Naive thymus-derived CD4-positive, alpha-beta T cell (primary cell): ENCODE measurements at regions of chr9 and their contacts with region 1.

Region 1: DNA sequence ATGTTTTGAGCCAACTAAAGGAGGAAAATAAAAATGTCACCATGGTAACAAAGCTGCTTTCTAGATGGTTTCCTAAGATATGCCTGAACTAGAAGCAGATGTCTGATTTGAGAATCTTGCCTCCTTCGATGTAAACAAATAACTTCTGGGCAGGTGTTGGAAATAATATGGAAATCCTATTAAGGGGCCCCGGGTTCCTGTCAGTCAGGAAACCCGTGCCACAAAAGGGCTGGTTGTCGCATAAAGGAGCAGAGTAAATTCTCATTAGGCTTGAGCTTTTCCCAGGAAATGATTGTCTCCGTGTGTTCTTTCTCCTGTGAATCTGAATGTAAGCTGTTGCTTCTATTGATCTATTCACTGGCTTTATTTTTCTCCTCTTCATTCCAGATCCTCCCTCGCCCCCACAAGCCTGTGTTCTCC is 90.8 kb downstream of the TLE4 start:
- DNase-seq: peak in 4 of 9 donors; percentile 3 to 36 (median 18)
- ATAC-seq: no peak
- H3K4me3 ChIP-seq: no peak overlapping the region
- H3K4me3 Mint-ChIP-seq: peak overlapping the region in 3 of 10 donors; percentile 12 to 34 (median 27)
- H3K27ac ChIP-seq: no peak overlapping the region
- H3K27ac Mint-ChIP-seq: peak overlapping the region in 8 of 9 donors; percentile 19 to 79 (median 52)
- H3K4me1 ChIP-seq: peaks cover 5 to 9% of the 10 kb centered on the region in 2 donors
- H3K4me1 Mint-ChIP-seq: peaks cover 15 to 77% (median 39%) of the 10 kb centered on the region in 7 donors
- H3K27me3 ChIP-seq: no peaks in the 10 kb centered on the region
- H3K27me3 Mint-ChIP-seq: no peaks in the 10 kb centered on the region

Region 2: DNA sequence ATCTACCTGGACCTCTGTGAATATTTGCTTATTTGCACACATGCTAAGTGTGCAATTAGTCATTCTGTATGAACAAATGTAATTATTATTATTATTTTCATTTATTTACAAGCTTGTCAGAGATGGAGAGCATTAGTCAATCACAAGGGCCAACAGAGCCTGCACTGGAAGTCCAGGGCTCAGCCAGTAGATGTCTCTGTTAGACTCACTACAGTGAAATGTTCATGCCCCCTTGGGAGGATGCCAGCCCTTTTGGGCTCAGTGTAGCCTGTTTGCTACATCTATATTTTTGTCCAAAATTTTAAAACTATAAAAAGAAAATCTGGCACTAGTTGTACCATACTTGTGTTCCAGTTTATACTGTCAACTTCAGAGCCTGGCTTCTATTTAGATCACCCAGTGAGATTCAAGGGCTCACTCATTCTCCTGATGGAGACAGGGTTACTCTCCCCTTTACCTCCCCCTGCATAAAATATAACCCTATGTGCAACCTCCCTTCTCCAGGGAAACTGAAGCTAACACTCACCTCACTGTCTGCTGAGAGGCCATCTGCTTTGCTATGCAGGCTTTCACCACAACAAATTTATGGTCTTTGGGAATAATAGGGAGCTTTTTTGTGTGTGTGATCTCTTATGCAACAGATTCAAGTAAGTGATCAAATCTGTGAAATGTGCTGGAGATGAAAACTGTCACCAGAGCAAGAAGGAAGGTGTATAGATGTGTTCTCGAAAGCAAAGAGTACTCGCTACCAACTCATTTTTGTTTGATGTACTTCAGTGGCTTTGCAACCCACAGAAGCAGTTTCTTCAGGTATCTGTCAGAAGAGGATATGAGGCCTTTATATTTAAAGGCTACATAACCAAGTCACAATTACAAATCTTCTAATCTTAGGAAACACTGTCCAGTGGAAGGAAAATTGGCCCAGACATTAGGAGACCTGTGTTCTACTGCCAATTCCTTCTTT is 190.7 kb before region 1 on chr9:
- CTCF ChIA-PET with region 1: no interaction called
- POLR2A ChIA-PET with region 1: no interaction called
- intact Hi-C with region 1: loop called in 1 of 2 experiments (anchors 1 kb)
- DNase-seq: peak in 6 of 9 donors; percentile 12 to 43 (median 18)
- ATAC-seq: peak; percentile 56
- H3K4me3 ChIP-seq: no peak overlapping the region
- H3K4me3 Mint-ChIP-seq: no peak overlapping the region
- H3K27ac ChIP-seq: no peak overlapping the region
- H3K27ac Mint-ChIP-seq: peak overlapping the region in 3 of 9 donors; percentile 44 to 75 (median 45)
- H3K4me1 ChIP-seq: peaks cover 0 to 8% of the 10 kb centered on the region in 2 donors
- H3K4me1 Mint-ChIP-seq: peaks cover 0 to 30% (median 24%) of the 10 kb centered on the region in 7 donors
- H3K27me3 ChIP-seq: no peaks in the 10 kb centered on the region
- H3K27me3 Mint-ChIP-seq: no peaks in the 10 kb centered on the region

Region 3: GRCh38 chr9:79646096-79646495 is 16.5 kb before region 1 on chr9:
- CTCF ChIA-PET with region 1: interaction called, 3 read pairs
- POLR2A ChIA-PET with region 1: no interaction called
- intact Hi-C with region 1: loop called in 1 of 2 experiments (anchors 2 kb)
- DNase-seq: no peak
- ATAC-seq: no peak
- H3K4me3 ChIP-seq: no peak overlapping the region
- H3K4me3 Mint-ChIP-seq: no peak overlapping the region
- H3K27ac ChIP-seq: no peak overlapping the region
- H3K27ac Mint-ChIP-seq: no peak overlapping the region
- H3K4me1 ChIP-seq: peaks cover 0 to 5% of the 10 kb centered on the region in 2 donors
- H3K4me1 Mint-ChIP-seq: peaks cover 2 to 44% (median 31%) of the 10 kb centered on the region in 7 donors
- H3K27me3 ChIP-seq: no peaks in the 10 kb centered on the region
- H3K27me3 Mint-ChIP-seq: no peaks in the 10 kb centered on the region